Heart left ventricle (tissue), 16 donors: ENCODE measurements at regions of chr15 and their contacts with region 1.

Region 1: DNA sequence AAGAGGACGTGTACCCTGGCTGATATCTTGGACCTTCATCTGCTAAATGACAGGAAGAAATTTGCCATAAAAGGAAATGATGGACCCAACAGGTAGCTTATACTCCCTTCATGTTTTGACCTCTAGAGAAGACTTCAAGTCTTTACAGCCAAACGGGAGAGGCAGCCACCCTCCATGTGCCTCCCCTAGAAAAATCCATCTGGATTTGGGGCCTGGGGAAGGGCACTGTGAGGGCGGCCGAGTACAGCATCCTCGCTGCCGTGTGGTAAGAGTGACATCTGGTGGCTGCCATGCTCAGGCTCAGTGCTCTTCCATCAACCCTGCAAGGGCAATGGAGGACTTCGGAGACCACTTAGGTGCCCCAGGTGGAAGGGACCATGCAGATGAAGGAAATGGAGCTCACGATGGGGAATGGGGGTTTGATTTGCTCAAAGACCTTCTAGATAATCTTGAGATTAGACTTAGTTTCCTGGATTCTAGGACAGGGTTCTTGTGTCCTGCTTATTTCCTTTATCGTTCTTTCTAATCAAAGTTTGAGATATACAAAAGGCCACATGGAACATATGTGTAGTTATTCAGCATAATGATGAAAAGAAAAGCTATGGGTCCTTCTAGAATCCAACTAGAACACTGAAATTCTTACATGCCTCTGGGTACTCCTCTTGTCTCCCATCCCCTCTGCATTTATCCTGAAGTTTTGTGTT is 44.4 kb downstream of the AQP9 start:
- DNase-seq: peak; percentile 27 to 72 (median 40)
- ATAC-seq: peak; percentile 26 to 93 (median 90)
- H3K4me3 ChIP-seq: no peak overlapping the region
- H3K27ac ChIP-seq: no peak overlapping the region
- H3K4me1 ChIP-seq: peaks cover 0 to 3% (median 0%) of the 10 kb centered on the region in 12 donors
- H3K27me3 ChIP-seq: peaks cover 0 to 8% (median 0%) of the 10 kb centered on the region in 9 donors
- CTCF ChIP-seq: peak; percentile 57 to 84 (median 76)
- POLR2A ChIP-seq: no peak

Region 2: DNA sequence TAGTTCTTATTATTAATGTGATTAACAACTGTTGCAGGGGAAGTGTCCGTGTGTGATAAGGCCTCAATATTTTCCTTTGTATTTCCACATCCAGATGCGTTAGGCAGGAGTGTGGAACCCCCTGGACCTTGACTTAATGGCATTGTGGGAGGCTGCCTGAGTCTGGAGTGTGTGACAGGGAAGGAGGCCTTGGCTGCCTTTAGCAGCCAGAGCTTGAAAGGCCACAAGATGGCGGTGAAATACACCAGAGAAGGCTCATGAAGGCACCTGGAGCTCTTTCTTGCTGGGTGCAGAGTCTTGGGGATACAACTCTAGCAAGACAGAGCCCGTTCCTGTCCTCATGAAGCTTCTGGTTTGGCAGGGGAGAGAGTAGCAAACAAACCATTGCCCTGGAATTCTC is 439.2 kb before region 1 on chr15:
- intact Hi-C with region 1: loop called in 6 of 10 experiments (anchors 5 to 10 kb)
- DNase-seq: no peak
- ATAC-seq: no peak
- H3K4me3 ChIP-seq: no peak overlapping the region
- H3K27ac ChIP-seq: no peak overlapping the region
- H3K4me1 ChIP-seq: no peaks in the 10 kb centered on the region
- H3K27me3 ChIP-seq: no peaks in the 10 kb centered on the region
- CTCF ChIP-seq: peak in 3 of 12 donors; percentile 5 to 27 (median 15)
- POLR2A ChIP-seq: no peak

Region 3: GRCh38 chr15:57866149-57866736 is 316.4 kb before region 1 on chr15:
- intact Hi-C with region 1: loop called in 4 of 10 experiments (anchors 5 to 10 kb)
- DNase-seq: peak; percentile 28 to 67 (median 52)
- ATAC-seq: peak in 2 of 4 donors; percentile 54 to 62
- H3K4me3 ChIP-seq: no peak overlapping the region
- H3K27ac ChIP-seq: no peak overlapping the region
- H3K4me1 ChIP-seq: peaks cover 0 to under 1% (median 0%) of the 10 kb centered on the region in 12 donors
- H3K27me3 ChIP-seq: peaks cover 0 to 6% (median 0%) of the 10 kb centered on the region in 9 donors
- CTCF ChIP-seq: peak; percentile 64 to 85 (median 80)
- POLR2A ChIP-seq: no peak

Region 4: GRCh38 chr15:58077427-58077826 is 105.2 kb before region 1 on chr15:
- intact Hi-C with region 1: loop called in 7 of 10 experiments (anchors 2 to 10 kb)
- DNase-seq: no peak
- ATAC-seq: no peak
- H3K4me3 ChIP-seq: no peak overlapping the region
- H3K27ac ChIP-seq: no peak overlapping the region
- H3K4me1 ChIP-seq: no peaks in the 10 kb centered on the region
- H3K27me3 ChIP-seq: peaks cover 0 to 14% (median 0%) of the 10 kb centered on the region in 9 donors
- CTCF ChIP-seq: peak in 2 of 12 donors; percentile 15 to 21
- POLR2A ChIP-seq: no peak